AG04449 (cell line): ENCODE measurements at regions of chr12 and their contacts with region 1.

Region 1: DNA sequence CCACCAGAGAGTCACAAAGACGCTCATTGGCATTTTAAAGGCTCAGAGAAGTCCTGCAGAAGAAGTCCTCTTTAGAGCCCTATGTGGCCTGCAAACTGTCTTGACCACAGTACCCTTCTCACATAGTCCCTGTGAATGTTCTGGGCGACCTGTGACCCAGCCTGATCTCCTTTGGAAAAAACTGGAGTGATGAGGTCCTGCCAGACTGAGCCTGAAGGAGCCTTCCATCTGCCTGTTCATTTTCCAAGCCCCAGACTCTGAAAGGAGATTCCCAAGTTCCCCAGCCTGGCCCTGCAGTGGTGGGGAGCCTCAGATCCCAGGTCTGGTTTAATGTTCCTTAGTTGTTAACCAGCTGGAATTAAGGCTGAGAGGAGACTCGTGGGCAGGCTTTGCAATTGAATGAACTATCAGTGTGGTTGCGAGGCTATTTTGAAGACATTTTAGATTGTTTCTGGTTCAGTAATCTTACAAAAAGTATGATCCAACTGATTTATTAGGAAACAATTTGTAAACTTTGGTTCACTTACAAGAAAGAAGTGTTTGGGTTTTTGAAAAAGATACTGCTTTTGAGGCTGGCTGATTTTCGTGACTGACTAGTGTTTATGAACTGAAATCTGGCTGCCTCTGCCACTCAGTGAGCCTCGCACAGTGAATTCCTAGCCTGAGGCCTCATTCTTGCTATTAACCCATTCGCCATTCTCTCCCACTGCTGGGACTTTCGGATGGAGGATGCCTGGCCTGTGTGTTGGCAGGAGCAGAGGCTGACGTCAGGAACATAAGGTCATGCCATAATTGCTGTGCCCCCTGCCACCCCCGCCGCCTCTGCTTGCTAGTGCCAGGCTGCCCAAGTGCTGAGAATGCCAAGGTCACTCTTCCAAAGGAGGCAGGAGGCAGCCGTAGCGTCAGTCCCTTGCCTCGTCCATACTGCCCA is 249.0 kb downstream of the CACNA1C start:
- DNase-seq: peak; percentile 59
- H3K4me3 ChIP-seq: no peak overlapping the region
- CTCF ChIP-seq: no peak

Region 2: DNA sequence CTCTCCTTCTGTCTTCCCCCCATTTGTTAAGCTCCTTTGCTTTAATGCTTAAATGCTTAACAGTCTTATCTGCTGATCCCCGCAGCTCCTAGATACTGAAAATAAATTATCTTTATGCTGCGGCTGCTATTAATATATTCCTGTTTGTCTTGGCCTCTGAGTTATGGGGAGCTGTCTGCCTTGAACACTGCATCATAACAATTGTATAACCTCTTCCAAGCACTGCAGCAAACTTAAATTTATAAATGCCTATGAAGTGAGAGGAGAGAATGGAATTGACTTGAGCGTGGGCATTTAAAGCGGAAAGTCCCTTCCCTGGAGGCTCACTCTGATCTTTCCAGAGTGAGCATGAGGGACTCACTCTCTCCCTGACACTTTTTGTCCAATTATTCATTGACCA is 274.4 kb before region 1 on chr12:
- CTCF ChIA-PET with region 1: no interaction called
- POLR2A ChIA-PET with region 1: no interaction called
- DNase-seq: no peak
- H3K4me3 ChIP-seq: no peak overlapping the region
- CTCF ChIP-seq: no peak

Region 3: GRCh38 chr12:2239381-2239871 is 62.4 kb before region 1 on chr12:
- CTCF ChIA-PET with region 1: no interaction called
- POLR2A ChIA-PET with region 1: no interaction called
- DNase-seq: no peak
- H3K4me3 ChIP-seq: no peak overlapping the region
- CTCF ChIP-seq: no peak

Region 4: DNA sequence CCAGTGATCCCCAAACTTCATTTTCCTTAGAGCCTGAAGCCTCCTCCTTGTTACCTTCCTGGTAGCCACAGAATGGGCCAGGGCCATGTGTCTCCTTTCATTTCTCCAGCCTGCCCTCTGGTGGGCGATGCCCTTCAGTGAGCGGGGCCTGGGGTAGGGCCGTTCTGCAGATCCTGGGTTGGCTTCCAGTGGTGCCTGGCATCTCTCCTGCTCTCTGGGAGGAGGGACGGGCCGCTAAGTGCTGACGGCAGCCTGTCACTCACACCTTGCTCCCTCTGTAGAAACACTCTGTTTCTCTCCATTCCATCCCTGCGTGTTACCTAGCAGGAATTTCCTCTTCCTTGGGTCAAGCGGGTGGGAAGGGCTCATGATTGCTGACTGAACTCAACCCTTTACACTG is 16.9 kb before region 1 on chr12:
- CTCF ChIA-PET with region 1: interaction called, 19 read pairs
- POLR2A ChIA-PET with region 1: interaction called, 3 read pairs
- DNase-seq: no peak
- H3K4me3 ChIP-seq: peak overlapping the region; percentile 24
- CTCF ChIP-seq: peak; percentile 87

Region 5: DNA sequence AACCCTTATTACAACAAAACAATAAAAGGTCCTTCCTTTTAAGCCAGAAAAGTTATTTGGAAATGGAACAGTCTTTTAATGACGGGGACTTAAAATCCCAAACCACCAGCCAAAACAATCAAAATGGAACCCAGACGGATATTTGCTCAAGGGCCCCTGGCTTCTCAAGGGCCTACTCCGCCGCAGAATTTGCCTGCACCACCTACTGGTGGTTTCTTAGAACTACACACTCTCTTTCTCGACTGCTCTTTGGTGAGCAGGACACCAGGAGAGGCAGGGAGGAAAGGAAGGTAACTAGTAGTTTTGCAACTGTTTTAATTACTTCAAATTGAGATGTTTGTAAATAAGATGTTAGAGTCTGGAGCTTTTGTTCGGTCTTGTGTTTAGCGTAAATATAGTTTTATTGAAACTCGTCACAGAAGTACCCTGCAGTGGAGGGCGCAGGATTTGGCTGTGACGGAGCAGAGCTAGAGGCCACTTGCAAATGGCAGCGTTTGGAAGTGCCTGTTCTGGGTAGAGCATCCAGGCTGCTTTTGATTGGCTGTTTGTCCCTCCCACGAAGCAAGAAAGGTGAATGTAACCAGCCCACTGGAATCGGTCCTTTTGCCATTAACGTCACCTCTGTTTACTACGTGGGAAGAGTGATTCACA is 10.5 kb before region 1 on chr12:
- CTCF ChIA-PET with region 1: interaction called, 19 read pairs
- POLR2A ChIA-PET with region 1: interaction called, 3 read pairs
- DNase-seq: no peak
- H3K4me3 ChIP-seq: no peak overlapping the region
- CTCF ChIP-seq: peak; percentile 53